Caco-2 (cell line): ENCODE measurements at regions of chr1 and their contacts with region 1.

Region 1: GRCh38 chr1:31593770-31594632 is 17.7 kb downstream of the TINAGL1 start:
- DNase-seq: peak; percentile 81 to 85
- H3K4me3 ChIP-seq: no peak overlapping the region
- H3K4me3 Mint-ChIP-seq: no peak overlapping the region
- H3K27ac Mint-ChIP-seq: no peak overlapping the region
- H3K4me1 ChIP-seq: peaks cover 21% of the 10 kb centered on the region
- H3K4me1 Mint-ChIP-seq: peaks cover 13% of the 10 kb centered on the region
- H3K27me3 ChIP-seq: no peaks in the 10 kb centered on the region
- H3K27me3 Mint-ChIP-seq: no peaks in the 10 kb centered on the region
- CTCF ChIP-seq: peak; percentile 78 to 84

Region 2: GRCh38 chr1:31336687-31337467 is 257.1 kb before region 1 on chr1:
- CTCF ChIA-PET with region 1: no interaction called
- POLR2A ChIA-PET with region 1: no interaction called
- intact Hi-C with region 1: no loop called
- DNase-seq: no peak
- H3K4me3 ChIP-seq: no peak overlapping the region
- H3K4me3 Mint-ChIP-seq: no peak overlapping the region
- H3K27ac Mint-ChIP-seq: no peak overlapping the region
- H3K4me1 ChIP-seq: no peaks in the 10 kb centered on the region
- H3K4me1 Mint-ChIP-seq: no peaks in the 10 kb centered on the region
- H3K27me3 ChIP-seq: no peaks in the 10 kb centered on the region
- H3K27me3 Mint-ChIP-seq: no peaks in the 10 kb centered on the region
- CTCF ChIP-seq: no peak

Region 3: GRCh38 chr1:31434171-31434871 is 159.7 kb before region 1 on chr1:
- CTCF ChIA-PET with region 1: no interaction called
- POLR2A ChIA-PET with region 1: no interaction called
- intact Hi-C with region 1: no loop called
- DNase-seq: no peak
- H3K4me3 ChIP-seq: no peak overlapping the region
- H3K4me3 Mint-ChIP-seq: no peak overlapping the region
- H3K27ac Mint-ChIP-seq: no peak overlapping the region
- H3K4me1 ChIP-seq: no peaks in the 10 kb centered on the region
- H3K4me1 Mint-ChIP-seq: no peaks in the 10 kb centered on the region
- H3K27me3 ChIP-seq: no peaks in the 10 kb centered on the region
- H3K27me3 Mint-ChIP-seq: no peaks in the 10 kb centered on the region
- CTCF ChIP-seq: no peak

Region 4: GRCh38 chr1:31564134-31564989 is 29.6 kb before region 1 on chr1:
- CTCF ChIA-PET with region 1: no interaction called
- POLR2A ChIA-PET with region 1: no interaction called
- intact Hi-C with region 1: loop called (anchors 1 kb)
- DNase-seq: peak; percentile 63 to 76
- H3K4me3 ChIP-seq: no peak overlapping the region
- H3K4me3 Mint-ChIP-seq: no peak overlapping the region
- H3K27ac Mint-ChIP-seq: peak overlapping the region; percentile 95
- H3K4me1 ChIP-seq: peaks cover 28% of the 10 kb centered on the region
- H3K4me1 Mint-ChIP-seq: peaks cover 19% of the 10 kb centered on the region
- H3K27me3 ChIP-seq: no peaks in the 10 kb centered on the region
- H3K27me3 Mint-ChIP-seq: no peaks in the 10 kb centered on the region
- CTCF ChIP-seq: peak; percentile 51 to 62

Region 5: DNA sequence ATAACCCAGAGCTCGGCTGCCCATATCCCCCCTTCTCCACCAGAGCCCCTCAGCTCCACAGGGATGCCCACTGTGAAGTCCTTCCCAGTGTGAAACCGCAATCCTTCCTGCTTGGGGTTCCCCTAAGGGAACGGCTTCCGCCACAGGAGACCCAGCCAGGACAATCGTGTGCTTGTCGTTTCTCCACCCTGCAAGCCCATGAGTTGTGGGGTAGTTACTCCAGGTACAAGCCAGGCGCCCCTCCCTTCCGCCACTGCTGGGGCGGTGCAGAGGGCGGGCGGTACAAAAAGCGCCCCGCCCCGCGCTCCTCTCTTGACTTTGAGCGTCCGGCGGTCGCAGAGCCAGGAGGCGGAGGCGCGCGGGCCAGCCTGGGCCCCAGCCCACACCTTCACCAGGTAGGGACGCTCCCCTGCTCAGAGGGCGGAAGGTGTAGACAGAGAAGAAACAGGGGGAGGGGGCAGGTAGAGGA is 17.8 kb before region 1 on chr1 and contains the start of gene TINAGL1:
- CTCF ChIA-PET with region 1: no interaction called
- POLR2A ChIA-PET with region 1: no interaction called
- intact Hi-C with region 1: loop called (anchors 2 kb)
- DNase-seq: peak; percentile 86
- H3K4me3 ChIP-seq: peak within 1 kb of the TSS; percentile 75
- H3K4me3 Mint-ChIP-seq: no peak within 1 kb of the TSS
- H3K27ac Mint-ChIP-seq: peak within 1 kb of the TSS; percentile 83
- H3K4me1 ChIP-seq: peaks cover 47% of the 10 kb centered on the region
- H3K4me1 Mint-ChIP-seq: peaks cover 30% of the 10 kb centered on the region
- H3K27me3 ChIP-seq: no peaks in the 10 kb centered on the region
- H3K27me3 Mint-ChIP-seq: no peaks in the 10 kb centered on the region
- CTCF ChIP-seq: no peak
- total RNA-seq, gene TINAGL1: 89.3 and 101 TPM in 2 replicates

Region 6: GRCh38 chr1:31644560-31645273 is 50.7 kb after region 1 on chr1 and contains the start of gene PEF1:
- CTCF ChIA-PET with region 1: no interaction called
- POLR2A ChIA-PET with region 1: no interaction called
- intact Hi-C with region 1: no loop called
- DNase-seq: peak; percentile 97
- H3K4me3 ChIP-seq: peak within 1 kb of the TSS; percentile 86
- H3K4me3 Mint-ChIP-seq: peak within 1 kb of the TSS; percentile 100
- H3K27ac Mint-ChIP-seq: peak within 1 kb of the TSS; percentile 100
- H3K4me1 ChIP-seq: 0 out of 2 replicates have a peak, but pooled peaks cover 4% of the 10 kb centered on the region
- H3K4me1 Mint-ChIP-seq: no peaks in the 10 kb centered on the region
- H3K27me3 ChIP-seq: no peaks in the 10 kb centered on the region
- H3K27me3 Mint-ChIP-seq: no peaks in the 10 kb centered on the region
- CTCF ChIP-seq: no peak
- total RNA-seq, gene PEF1: 21.9 and 22.1 TPM in 2 replicates

Region 7: GRCh38 chr1:31762726-31763670 is 169.0 kb after region 1 on chr1:
- CTCF ChIA-PET with region 1: no interaction called
- POLR2A ChIA-PET with region 1: no interaction called
- intact Hi-C with region 1: no loop called
- DNase-seq: peak in 1 of 2 experiments; percentile 72
- H3K4me3 ChIP-seq: peak overlapping the region; percentile 38
- H3K4me3 Mint-ChIP-seq: peak overlapping the region; percentile 84
- H3K27ac Mint-ChIP-seq: no peak overlapping the region
- H3K4me1 ChIP-seq: peaks cover 25% of the 10 kb centered on the region
- H3K4me1 Mint-ChIP-seq: peaks cover 8% of the 10 kb centered on the region
- H3K27me3 ChIP-seq: no peaks in the 10 kb centered on the region
- H3K27me3 Mint-ChIP-seq: peaks cover 6% of the 10 kb centered on the region
- CTCF ChIP-seq: peak; percentile 33 to 37